Naive thymus-derived CD4-positive, alpha-beta T cell (primary cell): ENCODE measurements at regions of chr5 and their contacts with region 1.

Region 1: GRCh38 chr5:56270568-56271392 is 37.6 kb upstream of the ANKRD55 start:
- DNase-seq: peak; percentile 47 to 73 (median 68)
- ATAC-seq: peak; percentile 97
- H3K4me3 ChIP-seq: no peak overlapping the region
- H3K4me3 Mint-ChIP-seq: peak overlapping the region; percentile 37 to 88 (median 76)
- H3K27ac ChIP-seq: no peak overlapping the region
- H3K27ac Mint-ChIP-seq: peak overlapping the region in 7 of 9 donors; percentile 44 to 86 (median 67)
- H3K4me1 ChIP-seq: peaks cover 0 to 9% of the 10 kb centered on the region in 2 donors
- H3K4me1 Mint-ChIP-seq: peaks cover 12 to 33% (median 21%) of the 10 kb centered on the region in 7 donors
- H3K27me3 ChIP-seq: no peaks in the 10 kb centered on the region
- H3K27me3 Mint-ChIP-seq: peaks cover 0 to 6% (median 0%) of the 10 kb centered on the region in 5 donors

Region 2: GRCh38 chr5:56328753-56329560 is 58.2 kb after region 1 on chr5:
- CTCF ChIA-PET with region 1: interaction called, 7 read pairs
- POLR2A ChIA-PET with region 1: interaction called, 4 read pairs
- intact Hi-C with region 1: loop called (anchors 2 kb)
- DNase-seq: peak in 8 of 9 donors; percentile 22 to 75 (median 54)
- ATAC-seq: peak; percentile 88
- H3K4me3 ChIP-seq: peak overlapping the region; percentile 40
- H3K4me3 Mint-ChIP-seq: peak overlapping the region in 9 of 10 donors; percentile 15 to 81 (median 70)
- H3K27ac ChIP-seq: peak overlapping the region; percentile 69
- H3K27ac Mint-ChIP-seq: peak overlapping the region; percentile 46 to 95 (median 83)
- H3K4me1 ChIP-seq: peaks cover 22 to 49% of the 10 kb centered on the region in 2 donors
- H3K4me1 Mint-ChIP-seq: peaks cover 33 to 86% (median 72%) of the 10 kb centered on the region in 7 donors
- H3K27me3 ChIP-seq: no peaks in the 10 kb centered on the region
- H3K27me3 Mint-ChIP-seq: no peaks in the 10 kb centered on the region

Region 3: GRCh38 chr5:56670118-56670483 is 399.3 kb after region 1 on chr5:
- CTCF ChIA-PET with region 1: no interaction called
- POLR2A ChIA-PET with region 1: no interaction called
- intact Hi-C with region 1: loop called in 1 of 2 experiments (anchors 10 kb)
- DNase-seq: peak in 7 of 9 donors; percentile 9 to 68 (median 40)
- ATAC-seq: peak; percentile 89
- H3K4me3 ChIP-seq: peak overlapping the region; percentile 13
- H3K4me3 Mint-ChIP-seq: peak overlapping the region; percentile 55 to 83 (median 70)
- H3K27ac ChIP-seq: peak overlapping the region; percentile 65
- H3K27ac Mint-ChIP-seq: peak overlapping the region; percentile 80 to 95 (median 90)
- H3K4me1 ChIP-seq: peaks cover 0 to 40% of the 10 kb centered on the region in 2 donors
- H3K4me1 Mint-ChIP-seq: peaks cover 35 to 53% (median 45%) of the 10 kb centered on the region in 7 donors
- H3K27me3 ChIP-seq: no peaks in the 10 kb centered on the region
- H3K27me3 Mint-ChIP-seq: peaks cover 0 to 10% (median 0%) of the 10 kb centered on the region in 5 donors

Region 4: DNA sequence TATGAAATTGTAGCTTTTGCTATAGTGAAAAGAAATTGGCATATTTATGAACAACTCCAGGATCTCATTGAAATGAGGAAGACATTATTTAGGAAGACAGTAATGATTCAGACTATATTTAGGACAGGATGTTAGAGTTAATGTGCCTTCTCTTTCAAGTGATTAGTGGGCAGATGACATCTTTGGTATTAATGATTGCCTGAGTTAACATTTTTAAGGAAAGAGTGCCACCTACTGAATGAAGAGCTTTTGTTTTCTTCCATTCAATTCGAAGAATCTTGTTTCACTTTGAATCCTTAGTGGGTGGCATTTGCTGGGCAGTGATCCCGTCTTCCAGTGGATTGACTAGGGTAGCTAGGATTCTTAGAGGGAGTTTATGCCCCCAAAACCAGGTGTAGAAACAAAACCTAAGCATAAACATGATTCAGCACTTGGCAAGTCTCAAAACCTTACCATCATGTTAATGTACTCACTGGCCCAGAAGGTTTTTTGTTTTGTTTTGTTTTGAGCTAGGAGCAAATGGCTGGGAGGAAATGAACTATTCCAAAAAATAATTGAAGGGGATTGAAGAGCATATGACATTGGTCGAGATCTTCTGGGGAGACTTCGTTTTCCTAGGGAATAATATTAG is 567.7 kb after region 1 on chr5:
- CTCF ChIA-PET with region 1: interaction called, 131 read pairs
- POLR2A ChIA-PET with region 1: interaction called, 13 read pairs
- intact Hi-C with region 1: loop called (anchors 1 kb)
- DNase-seq: peak in 7 of 9 donors; percentile 33 to 61 (median 48)
- ATAC-seq: peak; percentile 75
- H3K4me3 ChIP-seq: no peak overlapping the region
- H3K4me3 Mint-ChIP-seq: peak overlapping the region; percentile 19 to 79 (median 57)
- H3K27ac ChIP-seq: peak overlapping the region; percentile 42
- H3K27ac Mint-ChIP-seq: peak overlapping the region; percentile 8 to 95 (median 78)
- H3K4me1 ChIP-seq: peaks cover 8 to 87% of the 10 kb centered on the region in 2 donors
- H3K4me1 Mint-ChIP-seq: peaks cover 63 to 95% (median 90%) of the 10 kb centered on the region in 7 donors
- H3K27me3 ChIP-seq: no peaks in the 10 kb centered on the region
- H3K27me3 Mint-ChIP-seq: no peaks in the 10 kb centered on the region

Region 5: DNA sequence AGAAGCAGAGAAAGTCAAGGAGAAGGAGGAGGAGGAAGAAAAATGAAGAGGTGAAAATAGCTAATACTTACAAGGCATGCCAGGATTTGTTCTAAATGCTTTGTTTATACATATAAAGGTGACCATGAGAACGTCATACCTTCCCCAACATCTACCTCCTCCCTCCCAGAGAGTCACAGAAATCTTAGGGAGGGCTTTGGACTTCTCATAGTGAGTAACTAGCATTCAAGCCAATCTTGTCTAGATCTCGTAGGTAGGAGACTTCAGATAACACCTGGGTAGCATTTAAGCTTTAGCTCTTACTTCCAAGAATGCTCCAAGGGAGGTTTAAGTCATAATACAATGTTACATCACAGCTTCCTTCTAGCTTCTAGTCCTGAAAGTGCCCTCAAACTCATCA is 866.6 kb after region 1 on chr5:
- CTCF ChIA-PET with region 1: interaction called, 7 read pairs
- POLR2A ChIA-PET with region 1: no interaction called
- intact Hi-C with region 1: loop called (anchors 1 kb)
- DNase-seq: no peak
- ATAC-seq: no peak
- H3K4me3 ChIP-seq: no peak overlapping the region
- H3K4me3 Mint-ChIP-seq: no peak overlapping the region
- H3K27ac ChIP-seq: no peak overlapping the region
- H3K27ac Mint-ChIP-seq: peak overlapping the region in 1 of 9 donors; percentile 4
- H3K4me1 ChIP-seq: no peaks in the 10 kb centered on the region
- H3K4me1 Mint-ChIP-seq: no peaks in the 10 kb centered on the region
- H3K27me3 ChIP-seq: no peaks in the 10 kb centered on the region
- H3K27me3 Mint-ChIP-seq: peaks cover 0 to 41% (median 0%) of the 10 kb centered on the region in 5 donors